ENCODE measurements at regions of chr7 and their contacts with region 1.

Region 1: DNA sequence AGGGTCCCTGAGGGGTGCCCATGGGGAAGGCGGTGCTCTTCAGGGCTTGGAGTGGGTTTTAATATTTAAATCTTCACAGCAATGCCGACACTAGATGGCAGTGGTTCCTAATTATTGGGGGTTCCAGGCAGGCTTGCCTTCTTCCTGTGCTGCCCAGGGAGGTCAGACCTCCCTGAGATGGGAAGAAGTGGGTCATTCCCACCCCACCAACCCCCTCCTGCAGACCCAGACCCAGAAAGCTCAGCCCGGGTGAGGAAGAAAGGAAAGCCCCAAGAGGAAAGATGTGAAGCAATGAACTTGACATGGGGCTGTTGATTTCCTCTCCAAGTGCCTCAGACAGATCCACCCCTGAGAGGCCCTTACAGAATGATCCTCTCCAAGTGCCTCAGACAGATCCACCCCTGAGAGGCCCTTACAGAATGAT is 85.1 kb upstream of the LANCL2 start:
- DNase-seq: peak in 32 of 35 experiments; percentile 6 to 81 (median 45)
- ATAC-seq: peak; percentile 60 to 85 (median 70)
- H3K4me3 ChIP-seq: no peak overlapping the region
- H3K4me3 Mint-ChIP-seq: no peak overlapping the region
- H3K27ac ChIP-seq: no peak overlapping the region
- H3K27ac Mint-ChIP-seq: no peak overlapping the region
- H3K4me1 ChIP-seq: peaks cover 0 to 6% of the 10 kb centered on the region in 2 experiments
- H3K4me1 Mint-ChIP-seq: peaks cover 0 to 6% (median 2%) of the 10 kb centered on the region in 3 donors
- H3K27me3 ChIP-seq: peaks cover 0 to 9% of the 10 kb centered on the region in 2 experiments
- H3K27me3 Mint-ChIP-seq: peaks cover 0 to 2% of the 10 kb centered on the region in 2 donors

Region 2: DNA sequence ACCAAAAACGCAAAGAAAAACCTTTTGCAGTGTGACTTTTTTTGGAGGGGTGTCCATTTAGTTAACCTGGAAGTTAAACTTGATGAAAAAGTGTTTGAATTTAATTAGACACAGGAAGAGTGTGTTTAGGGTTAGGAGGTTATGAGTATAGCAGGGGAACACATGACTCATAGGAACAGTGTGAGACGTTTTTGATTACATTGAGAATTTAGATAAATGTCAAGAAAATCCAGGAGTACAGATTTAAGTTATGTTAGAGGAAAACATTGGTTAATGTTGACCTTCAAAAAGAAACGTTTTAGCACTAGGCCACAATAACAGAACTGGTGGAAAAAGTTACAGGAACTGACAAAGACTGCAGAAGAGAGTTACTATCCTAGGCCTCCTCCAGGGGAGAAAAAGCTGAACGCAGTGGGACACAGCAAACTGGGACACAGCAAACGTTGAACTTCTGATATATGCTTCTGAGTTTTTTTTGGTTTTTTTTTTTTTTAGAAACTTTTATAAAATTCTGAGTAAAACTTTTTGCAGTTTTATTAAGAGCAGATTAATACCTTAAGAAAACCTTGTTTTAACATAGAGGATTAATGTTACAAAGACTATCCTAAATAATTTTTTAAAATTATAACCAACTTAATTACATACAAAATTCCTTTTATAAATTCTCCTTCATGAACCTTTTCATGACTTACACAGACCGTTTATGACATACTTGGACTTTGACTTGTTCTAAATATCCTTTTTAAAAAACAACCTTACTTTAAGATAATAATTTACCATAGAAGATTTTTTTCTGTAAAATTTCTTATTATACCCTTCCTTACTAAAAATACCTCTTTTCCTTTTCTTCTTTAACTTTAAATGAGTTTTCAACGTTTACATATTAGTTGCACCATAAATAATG is 107.3 kb after region 1 on chr7:
- CTCF ChIA-PET with region 1: no interaction called
- POLR2A ChIA-PET with region 1: no interaction called
- DNase-seq: no peak
- ATAC-seq: no peak
- H3K4me3 ChIP-seq: no peak overlapping the region
- H3K4me3 Mint-ChIP-seq: no peak overlapping the region
- H3K27ac ChIP-seq: no peak overlapping the region
- H3K27ac Mint-ChIP-seq: no peak overlapping the region
- H3K4me1 ChIP-seq: no peaks in the 10 kb centered on the region
- H3K4me1 Mint-ChIP-seq: peaks cover 0 to 4% (median 0%) of the 10 kb centered on the region in 3 donors
- H3K27me3 ChIP-seq: no peaks in the 10 kb centered on the region
- H3K27me3 Mint-ChIP-seq: no peaks in the 10 kb centered on the region

Region 3: GRCh38 chr7:55415173-55415778 is 135.2 kb after region 1 on chr7:
- CTCF ChIA-PET with region 1: interaction called, 22 to 31 read pairs
- POLR2A ChIA-PET with region 1: interaction called in 1 of 2 experiments, 7 read pairs
- DNase-seq: peak; percentile 54 to 88 (median 76)
- ATAC-seq: peak; percentile 86 to 94 (median 92)
- H3K4me3 ChIP-seq: no peak overlapping the region
- H3K4me3 Mint-ChIP-seq: no peak overlapping the region
- H3K27ac ChIP-seq: no peak overlapping the region
- H3K27ac Mint-ChIP-seq: no peak overlapping the region
- H3K4me1 ChIP-seq: no peaks in the 10 kb centered on the region
- H3K4me1 Mint-ChIP-seq: peaks cover 0 to 3% (median 3%) of the 10 kb centered on the region in 3 donors
- H3K27me3 ChIP-seq: no peaks in the 10 kb centered on the region
- H3K27me3 Mint-ChIP-seq: no peaks in the 10 kb centered on the region

Region 4: GRCh38 chr7:55423277-55423711 is 143.3 kb after region 1 on chr7:
- CTCF ChIA-PET with region 1: interaction called in 1 of 2 experiments, 10 read pairs
- POLR2A ChIA-PET with region 1: no interaction called
- DNase-seq: no peak
- ATAC-seq: no peak
- H3K4me3 ChIP-seq: no peak overlapping the region
- H3K4me3 Mint-ChIP-seq: no peak overlapping the region
- H3K27ac ChIP-seq: no peak overlapping the region
- H3K27ac Mint-ChIP-seq: no peak overlapping the region
- H3K4me1 ChIP-seq: no peaks in the 10 kb centered on the region
- H3K4me1 Mint-ChIP-seq: no peaks in the 10 kb centered on the region
- H3K27me3 ChIP-seq: no peaks in the 10 kb centered on the region
- H3K27me3 Mint-ChIP-seq: no peaks in the 10 kb centered on the region

Region 5: GRCh38 chr7:55964261-55965099 is 684.4 kb after region 1 on chr7 and contains the start of gene NIPSNAP2:
- CTCF ChIA-PET with region 1: interaction called in 1 of 2 experiments, 10 read pairs
- POLR2A ChIA-PET with region 1: no interaction called
- DNase-seq: peak; percentile 4 to 84 (median 47)
- ATAC-seq: peak; percentile 85 to 93 (median 88)
- H3K4me3 ChIP-seq: peak within 1 kb of the TSS; percentile 46 to 82
- H3K4me3 Mint-ChIP-seq: peak within 1 kb of the TSS; percentile 74 to 85 (median 84)
- H3K27ac ChIP-seq: peak within 1 kb of the TSS; percentile 81
- H3K27ac Mint-ChIP-seq: peak within 1 kb of the TSS; percentile 88 to 92
- H3K4me1 ChIP-seq: peaks cover 2 to 31% of the 10 kb centered on the region in 2 experiments
- H3K4me1 Mint-ChIP-seq: peaks cover 41 to 46% (median 42%) of the 10 kb centered on the region in 3 donors
- H3K27me3 ChIP-seq: no peaks in the 10 kb centered on the region
- H3K27me3 Mint-ChIP-seq: no peaks in the 10 kb centered on the region
- total RNA-seq, gene NIPSNAP2: 24.1 to 38.6 (median 28.4) TPM

Measured in T-cell (primary cell).